CD4-positive, alpha-beta T cell (primary cell): ENCODE measurements at regions of chr3 and their contacts with region 1.

Region 1: GRCh38 chr3:36957862-36958686 is 13.2 kb upstream of the TRANK1 start:
- DNase-seq: peak in 2 of 14 experiments; percentile 57 to 66
- ATAC-seq: no peak
- H3K4me3 ChIP-seq: no peak overlapping the region
- H3K4me3 Mint-ChIP-seq: no peak overlapping the region
- H3K27ac ChIP-seq: no peak overlapping the region
- H3K27ac Mint-ChIP-seq: peak overlapping the region; percentile 10
- H3K4me1 ChIP-seq: peaks cover 5% of the 10 kb centered on the region
- H3K4me1 Mint-ChIP-seq: peaks cover 5% of the 10 kb centered on the region
- H3K27me3 ChIP-seq: no peaks in the 10 kb centered on the region
- H3K27me3 Mint-ChIP-seq: no peaks in the 10 kb centered on the region
- CTCF ChIP-seq: no peak

Region 2: GRCh38 chr3:36729204-36730056 is 228.6 kb before region 1 on chr3:
- CTCF ChIA-PET with region 1: interaction called, 3 read pairs
- POLR2A ChIA-PET with region 1: no interaction called
- intact Hi-C with region 1: loop called (anchors 1 kb)
- DNase-seq: peak in 3 of 14 experiments; percentile 45 to 54 (median 54)
- ATAC-seq: no peak
- H3K4me3 ChIP-seq: no peak overlapping the region
- H3K4me3 Mint-ChIP-seq: no peak overlapping the region
- H3K27ac ChIP-seq: no peak overlapping the region
- H3K27ac Mint-ChIP-seq: no peak overlapping the region
- H3K4me1 ChIP-seq: no peaks in the 10 kb centered on the region
- H3K4me1 Mint-ChIP-seq: no peaks in the 10 kb centered on the region
- H3K27me3 ChIP-seq: peaks cover 0 to 3% of the 10 kb centered on the region in 2 experiments
- H3K27me3 Mint-ChIP-seq: peaks cover 6% of the 10 kb centered on the region
- CTCF ChIP-seq: peak; percentile 65

Region 3: GRCh38 chr3:36868614-36869436 is 89.2 kb before region 1 on chr3:
- CTCF ChIA-PET with region 1: interaction called, 23 read pairs
- POLR2A ChIA-PET with region 1: interaction called, 4 read pairs
- intact Hi-C with region 1: loop called (anchors 2 kb)
- DNase-seq: peak in 13 of 14 experiments; percentile 10 to 83 (median 27)
- ATAC-seq: peak; percentile 85
- H3K4me3 ChIP-seq: no peak overlapping the region
- H3K4me3 Mint-ChIP-seq: no peak overlapping the region
- H3K27ac ChIP-seq: no peak overlapping the region
- H3K27ac Mint-ChIP-seq: peak overlapping the region; percentile 12
- H3K4me1 ChIP-seq: peaks cover 18% of the 10 kb centered on the region
- H3K4me1 Mint-ChIP-seq: peaks cover 42% of the 10 kb centered on the region
- H3K27me3 ChIP-seq: no peaks in the 10 kb centered on the region
- H3K27me3 Mint-ChIP-seq: no peaks in the 10 kb centered on the region
- CTCF ChIP-seq: peak; percentile 68

Region 4: GRCh38 chr3:36893137-36893557 is 64.9 kb before region 1 on chr3:
- CTCF ChIA-PET with region 1: interaction called, 8 read pairs
- POLR2A ChIA-PET with region 1: interaction called, 3 read pairs
- intact Hi-C with region 1: loop called in 1 of 2 experiments (anchors 5 kb)
- DNase-seq: peak in 11 of 14 experiments; percentile 28 to 85 (median 37)
- ATAC-seq: peak; percentile 99
- H3K4me3 ChIP-seq: no peak overlapping the region
- H3K4me3 Mint-ChIP-seq: peak overlapping the region; percentile 68
- H3K27ac ChIP-seq: peak overlapping the region; percentile 0 to 65
- H3K27ac Mint-ChIP-seq: peak overlapping the region; percentile 99
- H3K4me1 ChIP-seq: peaks cover 40% of the 10 kb centered on the region
- H3K4me1 Mint-ChIP-seq: peaks cover 72% of the 10 kb centered on the region
- H3K27me3 ChIP-seq: no peaks in the 10 kb centered on the region
- H3K27me3 Mint-ChIP-seq: no peaks in the 10 kb centered on the region
- CTCF ChIP-seq: no peak

Region 5: GRCh38 chr3:36911990-36912804 is 45.9 kb before region 1 on chr3:
- CTCF ChIA-PET with region 1: interaction called, 10 read pairs
- POLR2A ChIA-PET with region 1: interaction called, 16 read pairs
- intact Hi-C with region 1: loop called in 1 of 2 experiments (anchors 2 kb)
- DNase-seq: peak in 8 of 14 experiments; percentile 14 to 80 (median 41)
- ATAC-seq: peak; percentile 82
- H3K4me3 ChIP-seq: peak overlapping the region; percentile 41
- H3K4me3 Mint-ChIP-seq: peak overlapping the region; percentile 40
- H3K27ac ChIP-seq: peak overlapping the region; percentile 42 to 67
- H3K27ac Mint-ChIP-seq: peak overlapping the region; percentile 73
- H3K4me1 ChIP-seq: peaks cover 29% of the 10 kb centered on the region
- H3K4me1 Mint-ChIP-seq: peaks cover 39% of the 10 kb centered on the region
- H3K27me3 ChIP-seq: no peaks in the 10 kb centered on the region
- H3K27me3 Mint-ChIP-seq: no peaks in the 10 kb centered on the region
- CTCF ChIP-seq: no peak